ENCODE measurements at regions of chr14 and their contacts with region 1.

Region 1: DNA sequence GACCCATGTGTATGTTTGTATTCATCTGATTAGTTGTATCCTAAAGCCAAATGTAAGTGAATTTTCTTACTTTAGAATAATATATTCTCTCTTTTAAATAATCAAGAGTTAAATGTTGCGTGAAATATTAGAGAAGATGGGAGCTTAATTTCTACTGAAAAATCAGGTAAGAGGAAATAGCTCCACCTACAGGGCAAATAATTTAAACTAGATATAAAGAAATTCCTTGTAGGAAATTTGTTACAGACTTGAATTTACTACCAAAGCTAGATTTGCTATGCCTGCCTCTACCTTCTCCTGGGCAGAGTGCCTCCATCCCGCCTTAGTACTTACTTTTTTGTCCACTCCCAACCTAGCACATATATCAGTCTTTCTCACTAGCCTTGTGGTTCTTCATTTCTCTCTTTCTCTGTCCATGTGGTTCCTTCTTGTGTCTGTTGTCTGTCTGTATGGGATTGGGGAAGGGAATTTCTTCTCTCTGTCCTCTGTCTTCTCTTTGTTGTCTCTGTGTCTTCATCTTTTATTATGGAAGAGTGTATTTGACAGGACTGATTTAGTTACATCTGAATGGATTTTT is 44.7 kb downstream of the PALS1 start:
- DNase-seq: no peak
- H3K4me3 ChIP-seq: no peak overlapping the region
- H3K27ac ChIP-seq: no peak overlapping the region
- H3K4me1 ChIP-seq: no peaks in the 10 kb centered on the region
- H3K27me3 ChIP-seq: no peaks in the 10 kb centered on the region
- CTCF ChIP-seq: peak; percentile 2 to 52 (median 40)
- EP300 ChIP-seq: no peak
- POLR2A ChIP-seq: no peak

Region 2: DNA sequence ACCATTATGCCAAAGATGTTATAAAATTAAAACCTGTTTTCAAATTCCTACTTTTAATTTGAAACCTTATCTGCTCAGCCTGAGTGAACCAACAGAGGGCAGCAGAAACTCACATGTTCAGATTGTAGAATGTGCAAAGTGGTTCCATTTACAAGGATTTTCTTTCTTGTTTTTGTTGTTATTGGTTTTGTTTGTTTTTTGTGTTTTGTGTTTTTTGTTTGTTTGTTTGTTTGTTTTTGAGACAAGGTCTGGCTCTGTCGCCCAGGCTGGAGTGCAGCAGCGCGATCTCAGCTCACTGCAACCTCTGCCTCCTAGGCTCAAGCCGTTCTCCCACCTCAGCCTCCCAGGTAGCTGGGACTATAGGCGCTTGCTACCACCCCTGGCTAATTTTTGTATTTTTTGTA is 119.5 kb before region 1 on chr14:
- intact Hi-C with region 1: loop called (anchors 1 kb)
- DNase-seq: no peak
- H3K4me3 ChIP-seq: no peak overlapping the region
- H3K27ac ChIP-seq: no peak overlapping the region
- H3K4me1 ChIP-seq: no peaks in the 10 kb centered on the region
- H3K27me3 ChIP-seq: no peaks in the 10 kb centered on the region
- CTCF ChIP-seq: peak; percentile 62 to 83 (median 79)
- EP300 ChIP-seq: no peak
- POLR2A ChIP-seq: no peak

Region 3: GRCh38 chr14:67919259-67920032 is 633.5 kb after region 1 on chr14:
- intact Hi-C with region 1: no loop called
- DNase-seq: no peak
- H3K4me3 ChIP-seq: no peak overlapping the region
- H3K27ac ChIP-seq: peak overlapping the region in 3 of 4 donors; percentile 48 to 61 (median 57)
- H3K4me1 ChIP-seq: peaks cover 0 to 13% (median 10%) of the 10 kb centered on the region in 4 donors
- H3K27me3 ChIP-seq: no peaks in the 10 kb centered on the region
- CTCF ChIP-seq: no peak
- EP300 ChIP-seq: no peak
- POLR2A ChIP-seq: no peak